PC-3 (cell line): ENCODE measurements at regions of chr2 and their contacts with region 1.

Region 1: GRCh38 chr2:133498662-133499585 is 69.3 kb downstream of the NCKAP5 start:
- DNase-seq: no peak
- ATAC-seq: no peak; the same call in 1 of the 2 replicates
- H3K4me3 ChIP-seq: no peak overlapping the region
- H3K27ac ChIP-seq: no peak overlapping the region
- H3K4me1 ChIP-seq: peaks cover 22% of the 10 kb centered on the region
- H3K27me3 ChIP-seq: no peaks in the 10 kb centered on the region
- CTCF ChIP-seq: no peak

Region 2: DNA sequence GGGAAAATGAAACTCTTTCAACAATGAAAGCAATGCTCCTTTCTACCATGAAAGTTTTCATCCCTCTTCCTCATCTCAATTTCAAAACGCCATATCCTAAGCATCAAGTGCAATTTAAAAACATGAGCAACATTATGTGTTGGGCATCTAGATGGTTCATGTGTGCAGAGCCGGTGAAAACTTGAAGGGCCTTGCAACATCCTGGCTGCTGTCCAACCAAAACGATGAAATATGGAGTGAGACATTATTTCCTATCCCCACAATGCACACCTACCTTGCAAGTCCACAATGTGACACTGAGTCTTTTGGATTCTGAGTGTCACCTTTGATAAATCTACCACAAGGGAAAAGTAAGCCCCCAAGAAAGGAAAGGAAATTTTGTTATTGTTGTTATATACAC is 40.6 kb before region 1 on chr2:
- CTCF ChIA-PET with region 1: no interaction called
- POLR2A ChIA-PET with region 1: no interaction called
- intact Hi-C with region 1: no loop called
- DNase-seq: peak; percentile 50
- ATAC-seq: peak; percentile 34
- H3K4me3 ChIP-seq: no peak overlapping the region
- H3K27ac ChIP-seq: peak overlapping the region; percentile 34
- H3K4me1 ChIP-seq: peaks cover 13% of the 10 kb centered on the region
- H3K27me3 ChIP-seq: no peaks in the 10 kb centered on the region
- CTCF ChIP-seq: no peak

Region 3: DNA sequence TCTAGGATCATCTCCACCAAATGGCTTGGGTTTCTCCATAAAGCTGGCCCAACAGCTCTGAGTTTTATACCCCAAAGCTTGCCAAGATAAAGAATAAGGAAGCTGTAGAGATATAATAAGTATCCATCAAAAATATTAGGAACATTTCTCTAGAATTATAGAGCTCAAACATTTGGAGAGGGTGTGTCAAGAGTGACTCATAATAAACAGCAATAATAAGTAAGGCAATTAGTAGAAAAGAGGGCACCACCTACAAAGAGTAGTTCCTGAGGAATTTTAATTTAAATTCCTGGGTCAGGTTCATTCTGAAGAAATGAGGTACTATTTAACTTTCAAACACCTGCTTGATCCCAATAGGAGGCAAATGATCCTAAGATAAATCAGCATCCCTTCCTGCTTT is 110.7 kb after region 1 on chr2:
- CTCF ChIA-PET with region 1: no interaction called
- POLR2A ChIA-PET with region 1: interaction called, 10 read pairs
- intact Hi-C with region 1: no loop called
- DNase-seq: peak; percentile 26
- ATAC-seq: peak; percentile 79
- H3K4me3 ChIP-seq: no peak overlapping the region
- H3K27ac ChIP-seq: no peak overlapping the region
- H3K4me1 ChIP-seq: peaks cover 10% of the 10 kb centered on the region
- H3K27me3 ChIP-seq: no peaks in the 10 kb centered on the region
- CTCF ChIP-seq: no peak